ENCODE measurements at regions of chr13 and their contacts with region 1.

Region 1: DNA sequence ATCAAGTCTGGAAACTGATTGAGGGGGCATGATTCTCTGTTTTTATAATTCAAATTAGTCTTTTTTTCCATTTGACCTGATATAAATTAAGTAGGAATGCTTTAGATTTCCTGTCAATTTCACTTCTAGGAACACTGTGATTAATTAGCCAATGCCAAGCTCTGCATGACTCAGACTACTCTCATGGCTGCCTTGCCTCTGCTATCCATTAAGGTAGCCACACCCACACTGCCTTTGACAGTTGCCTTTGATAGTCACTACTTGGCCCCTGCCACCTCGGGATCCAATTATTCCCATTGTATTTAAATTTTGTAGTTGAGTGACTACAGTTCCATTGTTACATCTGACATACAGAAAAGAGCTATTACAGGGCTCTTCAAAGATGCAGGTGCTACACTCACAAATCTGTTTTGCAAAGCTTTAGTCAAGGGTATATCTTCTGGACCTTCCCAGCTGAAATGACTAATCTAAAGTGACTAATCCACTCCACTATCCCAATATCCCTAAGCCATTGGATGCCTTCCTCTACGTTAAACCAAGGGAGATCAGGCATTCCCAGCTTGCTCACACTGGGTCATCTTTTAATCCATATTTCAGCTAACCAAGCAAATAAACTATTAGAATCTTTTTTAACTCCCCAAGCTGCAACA is 1193.1 kb upstream of the MIR17HG start:
- DNase-seq: no peak
- H3K4me3 ChIP-seq: no peak overlapping the region
- CTCF ChIP-seq: no peak
- POLR2A ChIP-seq: no peak

Region 2: DNA sequence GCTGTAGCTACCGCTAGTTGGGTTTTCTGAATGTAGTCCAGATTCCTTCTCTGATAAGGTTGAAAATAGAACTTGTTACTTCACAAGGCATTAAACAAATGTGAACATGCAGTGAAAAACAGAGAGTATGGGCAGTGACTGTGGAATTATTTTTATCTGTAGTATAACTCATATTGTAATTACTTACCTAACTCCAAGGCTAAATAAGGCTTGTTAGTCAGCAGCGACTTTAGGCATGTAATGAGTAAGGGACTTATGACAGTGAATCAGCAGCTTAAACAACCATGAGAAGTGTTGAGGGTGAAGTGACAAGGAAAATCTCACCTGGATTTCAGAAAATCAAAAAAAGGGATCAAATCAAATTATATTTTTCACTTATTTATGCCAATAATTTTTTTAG is 526.4 kb before region 1 on chr13:
- intact Hi-C with region 1: no loop called
- DNase-seq: no peak
- H3K4me3 ChIP-seq: no peak overlapping the region
- CTCF ChIP-seq: no peak
- POLR2A ChIP-seq: no peak

Region 3: DNA sequence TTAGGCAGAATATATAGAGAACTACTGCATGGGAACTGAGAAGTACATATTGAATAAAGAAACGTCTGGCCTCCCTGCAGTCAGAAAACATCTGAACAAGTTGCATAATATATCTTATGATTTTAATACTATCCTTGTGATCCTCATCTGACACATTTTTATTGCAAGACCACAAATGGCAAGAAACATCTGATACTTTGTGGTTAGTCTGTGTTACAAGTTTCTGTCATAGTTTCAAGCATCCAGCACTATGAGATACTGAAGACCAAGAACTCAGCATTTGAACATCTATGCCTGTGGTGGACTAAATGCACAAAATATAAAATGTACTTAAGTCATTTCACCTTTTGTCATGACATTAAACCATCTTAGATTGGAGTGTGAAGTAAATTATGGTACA is 17.2 kb after region 1 on chr13:
- intact Hi-C with region 1: loop called (anchors 1 kb)
- DNase-seq: no peak
- H3K4me3 ChIP-seq: no peak overlapping the region
- CTCF ChIP-seq: no peak
- POLR2A ChIP-seq: no peak

Region 4: GRCh38 chr13:91725646-91726045 is 1571.2 kb after region 1 on chr13:
- intact Hi-C with region 1: no loop called
- DNase-seq: no peak
- H3K4me3 ChIP-seq: no peak overlapping the region
- CTCF ChIP-seq: no peak
- POLR2A ChIP-seq: no peak

Measured in lower leg skin (tissue), 4 donors.